Activated T-helper 1 cell treated with anti-CD3 and anti-CD28 coated beads, Interleukin-12 subunit alpha, Interleukin-12 subunit beta, Interleukin-2, Interleukin-4 antibody, amounts not matched to agents 30 ng/mL and 10 ng/mL and 1 ng/mL, durations not matched to agents 14 hours and 24 hours and 36 hours (primary cell): ENCODE measurements at regions of chr9 and their contacts with region 1.

Region 1: GRCh38 chr9:89410641-89411350 is 87.1 kb downstream of the SEMA4D start:
- DNase-seq: peak; percentile 47
- H3K4me3 Mint-ChIP-seq: peak overlapping the region; percentile 75
- H3K27ac Mint-ChIP-seq: peak overlapping the region; percentile 96
- H3K4me1 Mint-ChIP-seq: peaks cover 100% of the 10 kb centered on the region
- H3K27me3 Mint-ChIP-seq: no peaks in the 10 kb centered on the region

Region 2: GRCh38 chr9:89237078-89237507 is 173.7 kb before region 1 on chr9:
- intact Hi-C with region 1: no loop called
- DNase-seq: no peak
- H3K4me3 Mint-ChIP-seq: no peak overlapping the region
- H3K27ac Mint-ChIP-seq: no peak overlapping the region
- H3K4me1 Mint-ChIP-seq: no peaks in the 10 kb centered on the region
- H3K27me3 Mint-ChIP-seq: peaks cover 44% of the 10 kb centered on the region

Region 3: GRCh38 chr9:89318123-89319014 is 92.4 kb before region 1 on chr9 and contains the start of gene SECISBP2:
- intact Hi-C with region 1: loop called (anchors 1 kb)
- DNase-seq: peak; percentile 93
- H3K4me3 Mint-ChIP-seq: peak within 1 kb of the TSS; percentile 90
- H3K27ac Mint-ChIP-seq: peak within 1 kb of the TSS; percentile 95
- H3K4me1 Mint-ChIP-seq: peaks cover 72% of the 10 kb centered on the region
- H3K27me3 Mint-ChIP-seq: no peaks in the 10 kb centered on the region
- total RNA-seq, gene SECISBP2: 49.4 and 54.9 TPM in 2 replicates

Region 4: DNA sequence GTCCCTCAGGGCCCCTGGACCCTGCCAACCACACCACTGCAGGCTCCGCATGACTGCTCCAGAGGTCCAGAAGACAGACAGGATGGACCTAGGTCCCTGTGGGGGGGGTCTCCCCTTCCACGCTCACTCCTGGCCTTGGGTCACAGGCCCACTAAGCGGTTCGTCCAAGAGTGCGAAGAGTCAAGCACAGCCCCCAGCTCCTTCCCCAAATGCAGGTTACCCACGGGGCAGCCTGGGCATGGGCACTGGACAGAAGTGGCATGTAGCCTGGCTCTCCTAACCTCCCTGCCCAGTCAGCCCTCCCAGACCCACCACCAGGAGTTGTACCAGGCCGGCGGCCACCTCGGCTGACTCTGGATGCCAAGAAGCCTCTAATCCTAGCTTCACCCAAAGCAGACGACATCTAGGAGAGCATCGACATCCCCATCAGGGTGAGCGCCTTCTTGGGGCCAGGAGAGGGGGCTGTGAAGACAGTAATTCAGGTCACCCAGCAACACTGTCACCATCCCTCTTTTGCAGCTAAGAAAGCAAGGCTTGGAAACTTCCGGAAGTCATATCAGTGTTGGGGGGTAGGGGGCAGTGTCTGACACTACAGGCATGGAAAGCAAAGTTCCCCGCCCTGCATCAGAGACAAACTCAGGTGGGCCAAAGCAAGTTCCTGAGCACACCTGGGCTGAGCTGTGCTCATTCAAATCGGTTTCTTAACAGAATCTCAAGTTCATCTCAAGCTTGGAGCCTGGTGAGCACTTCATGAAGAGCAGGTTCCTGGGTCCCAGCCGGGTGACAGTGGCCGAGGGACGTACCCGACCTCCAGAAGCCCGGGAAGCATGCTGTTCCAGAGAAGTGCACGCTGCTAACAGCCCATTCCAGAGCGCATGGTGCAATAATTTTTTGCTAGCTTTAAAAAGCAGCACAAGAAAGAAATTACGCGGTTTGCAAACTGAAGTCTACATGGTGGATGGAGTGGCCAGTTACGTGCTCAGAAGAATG is 18.4 kb after region 1 on chr9:
- intact Hi-C with region 1: loop called (anchors 1 kb)
- DNase-seq: no peak
- H3K4me3 Mint-ChIP-seq: no peak overlapping the region
- H3K27ac Mint-ChIP-seq: peak overlapping the region; percentile 100
- H3K4me1 Mint-ChIP-seq: peaks cover 91% of the 10 kb centered on the region
- H3K27me3 Mint-ChIP-seq: no peaks in the 10 kb centered on the region

Region 5: DNA sequence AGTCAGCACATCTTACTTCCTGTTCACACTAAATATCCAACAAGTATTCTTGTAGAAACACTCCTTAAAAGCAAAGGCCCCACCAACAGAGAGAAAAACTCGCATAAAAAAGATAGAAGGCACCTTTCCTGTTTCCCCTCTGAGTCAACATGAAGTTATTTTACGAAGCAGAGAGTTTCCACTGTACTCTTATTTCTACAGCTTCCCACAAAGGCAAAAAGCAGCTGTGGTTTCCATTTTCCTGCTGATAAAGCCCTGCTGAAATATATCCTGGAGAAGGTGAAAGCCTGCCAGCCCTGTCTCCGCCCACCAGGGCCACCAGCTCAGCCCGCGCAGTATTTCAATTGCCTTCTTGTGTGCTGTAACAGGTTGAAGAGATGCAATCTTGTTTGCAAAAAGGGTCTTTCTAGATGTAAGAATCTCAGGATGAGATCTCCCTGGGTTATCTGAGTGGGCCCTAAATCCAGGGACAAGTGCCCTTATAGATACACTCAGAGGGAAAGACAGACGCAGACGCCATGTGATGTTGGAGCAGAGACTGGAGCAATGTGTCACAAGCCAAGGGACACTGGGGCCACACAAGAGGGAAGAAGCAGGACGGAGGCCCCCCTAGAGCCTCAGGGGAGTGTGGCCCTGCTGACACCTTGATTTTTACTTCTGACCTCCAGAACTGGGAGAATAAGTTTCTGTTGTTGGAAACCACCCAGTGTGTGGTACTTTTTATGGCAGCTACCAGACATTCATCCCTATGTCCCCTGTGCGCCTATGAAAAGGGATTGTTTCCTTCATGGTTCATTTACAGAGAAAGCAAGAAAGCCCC is 67.2 kb after region 1 on chr9:
- intact Hi-C with region 1: loop called (anchors 1 kb)
- DNase-seq: peak; percentile 47
- H3K4me3 Mint-ChIP-seq: peak overlapping the region; percentile 89
- H3K27ac Mint-ChIP-seq: peak overlapping the region; percentile 96
- H3K4me1 Mint-ChIP-seq: peaks cover 90% of the 10 kb centered on the region
- H3K27me3 Mint-ChIP-seq: no peaks in the 10 kb centered on the region

Region 6: GRCh38 chr9:89536145-89536574 is 125.4 kb after region 1 on chr9:
- intact Hi-C with region 1: loop called (anchors 1 kb)
- DNase-seq: peak; percentile 41
- H3K4me3 Mint-ChIP-seq: peak overlapping the region; percentile 30
- H3K27ac Mint-ChIP-seq: peak overlapping the region; percentile 90
- H3K4me1 Mint-ChIP-seq: peaks cover 82% of the 10 kb centered on the region
- H3K27me3 Mint-ChIP-seq: no peaks in the 10 kb centered on the region

Region 7: GRCh38 chr9:89743573-89744361 is 333.0 kb after region 1 on chr9:
- intact Hi-C with region 1: loop called (anchors 10 kb)
- DNase-seq: peak; percentile 75
- H3K4me3 Mint-ChIP-seq: peak overlapping the region; percentile 25
- H3K27ac Mint-ChIP-seq: peak overlapping the region; percentile 82
- H3K4me1 Mint-ChIP-seq: peaks cover 90% of the 10 kb centered on the region
- H3K27me3 Mint-ChIP-seq: no peaks in the 10 kb centered on the region